ENCODE measurements at regions of chr4 and their contacts with region 1.

Region 1: DNA sequence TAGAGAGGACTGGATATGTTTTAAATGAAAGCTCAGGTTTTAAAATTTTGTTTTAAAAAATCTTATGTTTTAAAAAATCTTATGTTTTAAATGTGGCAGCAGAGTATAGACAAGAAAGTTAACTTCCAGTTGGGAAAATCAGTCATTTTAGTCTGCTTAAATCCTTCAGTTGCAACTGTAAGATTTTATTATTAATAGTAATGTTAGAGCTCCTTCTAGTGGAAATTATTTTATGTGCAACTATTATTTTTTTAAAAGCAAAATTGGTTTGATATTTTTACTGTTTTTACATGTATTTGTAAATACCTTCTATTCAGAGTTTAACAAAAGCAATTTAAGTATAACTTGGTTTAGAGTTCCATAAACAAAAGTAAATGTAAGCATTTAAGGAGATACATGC is 8.5 kb upstream of the NUDT6 start:
- H3K4me3 Mint-ChIP-seq: no peak overlapping the region
- H3K27ac Mint-ChIP-seq: no peak overlapping the region
- H3K4me1 Mint-ChIP-seq: no peaks in the 10 kb centered on the region
- H3K27me3 Mint-ChIP-seq: no peaks in the 10 kb centered on the region

Region 2: DNA sequence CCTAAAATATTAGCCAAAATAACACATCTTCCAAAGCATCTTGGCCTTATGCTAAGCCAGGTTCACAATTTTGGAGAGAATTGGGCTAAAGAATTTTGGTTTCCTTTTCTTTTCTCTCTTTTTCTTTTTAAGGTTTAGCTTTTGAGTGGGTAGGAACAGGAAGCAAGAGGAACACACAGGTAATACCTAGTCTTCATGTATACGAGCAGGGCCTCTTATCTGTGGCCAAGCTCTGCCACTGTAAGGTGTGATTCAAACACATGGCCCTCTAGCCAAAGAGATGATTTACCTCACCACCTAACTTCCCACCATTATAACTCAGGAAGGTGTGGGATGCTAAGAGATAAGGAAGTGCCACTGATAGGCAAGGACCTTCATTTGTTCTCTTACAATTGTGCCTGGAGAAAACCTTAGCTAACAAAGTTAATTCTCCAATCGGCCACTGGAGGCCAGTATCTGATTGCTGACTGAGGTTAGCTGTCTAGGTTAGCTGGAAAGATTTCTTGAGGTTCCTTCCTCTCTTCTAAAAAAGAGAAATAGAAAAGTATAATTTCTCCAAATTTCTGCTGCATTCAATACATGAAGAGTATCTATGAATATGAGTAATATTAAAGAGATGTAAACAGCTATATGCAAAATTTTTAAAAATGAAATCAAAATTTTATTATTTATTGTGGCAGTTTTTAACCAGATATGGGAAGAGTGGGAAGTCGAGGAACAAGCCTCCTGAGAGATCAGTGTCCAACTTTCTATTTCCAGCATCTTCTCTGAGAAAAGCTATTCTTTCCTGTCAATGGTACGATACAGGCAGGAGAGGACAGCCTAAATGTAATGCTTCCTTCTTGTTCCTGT is 1030.5 kb before region 1 on chr4:
- intact Hi-C with region 1: loop called (anchors 5 kb)
- H3K4me3 Mint-ChIP-seq: no peak overlapping the region
- H3K27ac Mint-ChIP-seq: no peak overlapping the region
- H3K4me1 Mint-ChIP-seq: no peaks in the 10 kb centered on the region
- H3K27me3 Mint-ChIP-seq: peaks cover 9% of the 10 kb centered on the region

Region 3: GRCh38 chr4:122309988-122310626 is 620.8 kb before region 1 on chr4:
- intact Hi-C with region 1: loop called (anchors 5 kb)
- H3K4me3 Mint-ChIP-seq: no peak overlapping the region
- H3K27ac Mint-ChIP-seq: no peak overlapping the region
- H3K4me1 Mint-ChIP-seq: peaks cover 5% of the 10 kb centered on the region
- H3K27me3 Mint-ChIP-seq: no peaks in the 10 kb centered on the region

Region 4: GRCh38 chr4:122758033-122758432 is 172.8 kb before region 1 on chr4:
- intact Hi-C with region 1: loop called (anchors 2 kb)
- H3K4me3 Mint-ChIP-seq: no peak overlapping the region
- H3K27ac Mint-ChIP-seq: no peak overlapping the region
- H3K4me1 Mint-ChIP-seq: peaks cover 9% of the 10 kb centered on the region
- H3K27me3 Mint-ChIP-seq: peaks cover 2% of the 10 kb centered on the region